HepG2 (cell line): ENCODE measurements at regions of chr10 and their contacts with region 1.

Region 1: GRCh38 chr10:571688-572451 is 117.6 kb downstream of the DIP2C start:
- DNase-seq: no peak
- ATAC-seq: no peak
- H3K4me3 ChIP-seq: no peak overlapping the region
- H3K27ac ChIP-seq: no peak overlapping the region
- H3K4me1 ChIP-seq: no peaks in the 10 kb centered on the region; the same call in 1 of the 2 replicates
- H3K27me3 ChIP-seq: no peaks in the 10 kb centered on the region
- CTCF ChIP-seq: no peak
- EP300 ChIP-seq: no peak
- POLR2A ChIP-seq: no peak
- RAD21 ChIP-seq: no peak

Region 2: GRCh38 chr10:794466-794865 is 222.6 kb after region 1 on chr10:
- CTCF ChIA-PET with region 1: no interaction called
- POLR2A ChIA-PET with region 1: no interaction called
- in situ Hi-C with region 1: no loop called
- intact Hi-C with region 1: loop called (anchors 5 kb)
- DNase-seq: peak; percentile 57
- ATAC-seq: peak; percentile 82
- H3K4me3 ChIP-seq: no peak overlapping the region
- H3K27ac ChIP-seq: no peak overlapping the region
- H3K4me1 ChIP-seq: peaks cover 12% of the 10 kb centered on the region
- H3K27me3 ChIP-seq: no peaks in the 10 kb centered on the region
- CTCF ChIP-seq: peak; percentile 81
- EP300 ChIP-seq: no peak
- POLR2A ChIP-seq: no peak
- RAD21 ChIP-seq: peak; percentile 78